ENCODE measurements at regions of chr1 and their contacts with region 1.

Region 1: DNA sequence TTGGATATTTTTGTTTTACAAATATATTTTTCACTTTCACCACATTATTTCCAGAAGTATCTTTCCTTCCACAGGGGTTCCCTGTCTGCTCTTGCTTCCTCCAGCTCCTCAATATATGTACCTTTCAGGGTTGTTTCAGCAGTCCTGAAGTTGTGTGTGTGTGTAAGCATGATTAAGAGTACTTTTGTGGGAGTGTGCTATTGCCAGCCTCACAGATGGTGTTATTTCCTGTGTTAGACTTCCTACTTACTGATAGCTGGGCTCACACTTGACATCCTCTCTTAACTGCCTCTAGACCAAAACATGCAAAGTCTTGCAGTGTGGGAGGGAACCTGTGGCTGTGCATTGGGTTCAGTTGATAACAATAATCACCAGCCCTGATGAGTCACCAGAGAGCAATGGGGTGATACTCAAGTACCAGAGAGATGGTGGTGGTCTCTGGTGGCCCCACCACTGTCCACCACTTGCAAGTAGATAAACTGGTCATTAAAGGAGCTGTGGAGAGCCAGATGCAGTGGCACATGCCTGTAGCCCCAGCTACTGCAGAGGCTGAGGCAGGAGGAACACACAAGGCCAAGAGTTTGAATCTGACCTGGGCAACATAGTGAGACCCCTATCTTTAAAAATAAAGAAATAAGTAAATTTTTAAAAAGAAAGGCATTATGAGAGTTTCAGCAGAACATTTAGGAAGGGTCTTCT is 126.7 kb downstream of the NR5A2 start:
- DNase-seq: peak; percentile 68
- H3K4me3 Mint-ChIP-seq: no peak overlapping the region
- H3K27ac Mint-ChIP-seq: peak overlapping the region; percentile 85
- H3K4me1 Mint-ChIP-seq: peaks cover 40% of the 10 kb centered on the region
- H3K27me3 Mint-ChIP-seq: no peaks in the 10 kb centered on the region

Region 2: DNA sequence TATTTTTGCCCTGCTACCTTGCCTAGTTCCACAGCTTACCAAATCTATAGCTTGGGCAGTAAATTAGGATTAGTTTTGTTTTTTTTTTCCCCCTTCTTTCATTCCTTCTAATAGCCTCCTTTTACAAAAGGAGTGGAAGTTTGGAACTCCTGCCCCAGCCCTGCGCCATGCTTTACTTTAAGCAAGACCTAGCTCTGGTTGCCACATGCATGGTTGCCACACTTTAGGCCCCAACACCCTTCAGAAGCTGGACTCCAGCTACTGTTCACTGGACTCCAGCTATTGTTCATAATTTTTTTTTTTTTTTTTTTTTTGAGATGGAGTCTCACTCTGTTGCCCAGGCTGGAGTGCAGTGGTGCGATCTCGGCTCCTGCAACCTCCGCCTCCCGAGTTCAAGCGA is 10.9 kb before region 1 on chr1:
- CTCF ChIA-PET with region 1: interaction called, 10 read pairs
- POLR2A ChIA-PET with region 1: no interaction called
- DNase-seq: no peak
- H3K4me3 Mint-ChIP-seq: no peak overlapping the region
- H3K27ac Mint-ChIP-seq: no peak overlapping the region
- H3K4me1 Mint-ChIP-seq: peaks cover 2% of the 10 kb centered on the region
- H3K27me3 Mint-ChIP-seq: peaks cover 3% of the 10 kb centered on the region